B cell (primary cell): ENCODE measurements at regions of chr4 and their contacts with region 1.

Region 1: DNA sequence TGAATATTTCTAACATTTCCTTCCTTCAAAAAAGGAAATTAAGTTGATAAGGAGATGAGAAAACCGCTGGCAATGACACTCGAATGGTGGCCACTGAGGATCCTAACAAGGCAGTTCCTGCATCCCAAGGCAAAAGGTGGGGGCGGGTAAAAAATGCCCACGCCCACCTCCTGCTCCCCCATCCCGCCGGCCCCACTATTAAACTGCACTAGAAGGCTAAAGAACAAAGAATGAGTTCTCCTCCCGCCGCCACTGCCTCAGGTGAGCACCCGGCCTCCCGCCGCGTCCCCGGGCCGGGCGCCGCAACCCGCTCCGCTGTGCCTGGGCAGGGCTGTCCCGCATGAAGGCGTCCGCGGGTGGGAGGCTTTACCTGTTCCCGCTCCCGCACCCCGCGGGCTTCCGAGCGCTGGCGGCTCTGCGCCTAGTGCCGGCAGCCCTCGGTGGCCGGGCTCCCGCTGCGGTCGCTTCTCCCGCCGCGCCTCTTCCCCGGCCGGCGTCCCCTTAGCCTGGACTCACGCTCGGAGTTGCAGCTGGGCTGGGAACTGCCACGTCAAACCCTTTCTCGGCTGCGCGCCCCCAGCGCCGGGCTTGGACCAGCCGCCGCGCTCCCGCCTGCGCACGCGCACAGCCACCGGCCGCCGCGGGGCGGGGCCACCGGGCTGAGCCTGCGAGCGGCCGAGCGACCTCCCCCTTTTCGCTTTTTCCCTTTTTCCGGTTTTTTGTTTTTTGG is at the start of gene SEC24D:
- DNase-seq: peak; percentile 89
- ATAC-seq: peak; percentile 88
- H3K4me3 ChIP-seq: peak within 1 kb of the TSS; percentile 59 to 98 (median 89)
- H3K4me3 Mint-ChIP-seq: peak within 1 kb of the TSS; percentile 97
- H3K27ac ChIP-seq: peak within 1 kb of the TSS; percentile 48 to 87
- H3K27ac Mint-ChIP-seq: peak within 1 kb of the TSS; percentile 93
- H3K4me1 ChIP-seq: peaks cover 10 to 11% of the 10 kb centered on the region in 2 donors
- H3K4me1 Mint-ChIP-seq: peaks cover 17% of the 10 kb centered on the region
- H3K27me3 ChIP-seq: no peaks in the 10 kb centered on the region
- H3K27me3 Mint-ChIP-seq: peaks cover 4% of the 10 kb centered on the region
- CTCF ChIP-seq: peak; percentile 11
- total RNA-seq, gene SEC24D: 15.8 and 19.8 TPM in 2 replicates

Region 2: DNA sequence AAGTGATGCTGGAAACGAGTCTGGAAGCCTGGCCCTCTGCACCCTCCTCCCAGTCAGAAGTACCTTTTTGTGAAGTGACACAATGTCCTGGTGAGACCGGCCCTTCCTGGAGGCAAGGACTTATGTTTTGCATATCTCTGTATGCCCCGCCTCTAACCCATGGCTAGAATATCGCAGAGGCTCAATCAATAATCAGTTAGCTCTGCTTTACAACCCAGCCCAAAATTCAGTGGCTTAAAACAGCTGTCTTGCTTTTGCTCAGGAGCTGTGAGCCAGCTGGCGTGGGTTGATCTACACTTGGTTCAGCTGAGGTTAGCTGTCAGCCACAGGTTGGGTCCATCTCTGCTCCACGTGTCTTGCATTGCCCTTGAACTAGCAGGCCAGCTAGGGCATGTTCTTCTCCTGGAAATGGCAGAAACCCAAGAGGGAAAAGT is 249.4 kb before region 1 on chr4:
- CTCF ChIA-PET with region 1: no interaction called
- POLR2A ChIA-PET with region 1: no interaction called
- intact Hi-C with region 1: loop called (anchors 2 kb)
- DNase-seq: no peak
- ATAC-seq: no peak
- H3K4me3 ChIP-seq: no peak overlapping the region
- H3K4me3 Mint-ChIP-seq: no peak overlapping the region
- H3K27ac ChIP-seq: no peak overlapping the region
- H3K27ac Mint-ChIP-seq: no peak overlapping the region
- H3K4me1 ChIP-seq: peaks cover 0 to 6% of the 10 kb centered on the region in 2 donors
- H3K4me1 Mint-ChIP-seq: peaks cover 9% of the 10 kb centered on the region
- H3K27me3 ChIP-seq: peaks cover 0 to 15% (median 4%) of the 10 kb centered on the region in 4 experiments
- H3K27me3 Mint-ChIP-seq: peaks cover 27% of the 10 kb centered on the region
- CTCF ChIP-seq: no peak

Region 3: GRCh38 chr4:118760493-118760892 is 75.2 kb before region 1 on chr4:
- CTCF ChIA-PET with region 1: interaction called, 3 read pairs
- POLR2A ChIA-PET with region 1: no interaction called
- intact Hi-C with region 1: loop called (anchors 1 kb)
- DNase-seq: peak; percentile 72
- ATAC-seq: peak; percentile 94
- H3K4me3 ChIP-seq: no peak overlapping the region
- H3K4me3 Mint-ChIP-seq: peak overlapping the region; percentile 17
- H3K27ac ChIP-seq: no peak overlapping the region
- H3K27ac Mint-ChIP-seq: peak overlapping the region; percentile 65
- H3K4me1 ChIP-seq: peaks cover 14 to 19% of the 10 kb centered on the region in 2 donors
- H3K4me1 Mint-ChIP-seq: peaks cover 26% of the 10 kb centered on the region
- H3K27me3 ChIP-seq: no peaks in the 10 kb centered on the region
- H3K27me3 Mint-ChIP-seq: no peaks in the 10 kb centered on the region
- CTCF ChIP-seq: no peak

Region 4: GRCh38 chr4:119300101-119300978 is 464.6 kb after region 1 on chr4:
- CTCF ChIA-PET with region 1: no interaction called
- POLR2A ChIA-PET with region 1: no interaction called
- intact Hi-C with region 1: loop called (anchors 10 kb)
- DNase-seq: peak; percentile 95
- ATAC-seq: peak; percentile 93
- H3K4me3 ChIP-seq: peak overlapping the region; percentile 87 to 97 (median 94)
- H3K4me3 Mint-ChIP-seq: peak overlapping the region; percentile 92
- H3K27ac ChIP-seq: peak overlapping the region; percentile 91 to 92
- H3K27ac Mint-ChIP-seq: peak overlapping the region; percentile 95
- H3K4me1 ChIP-seq: peaks cover 17 to 21% of the 10 kb centered on the region in 2 donors
- H3K4me1 Mint-ChIP-seq: peaks cover 30% of the 10 kb centered on the region
- H3K27me3 ChIP-seq: no peaks in the 10 kb centered on the region
- H3K27me3 Mint-ChIP-seq: peaks cover 5% of the 10 kb centered on the region
- CTCF ChIP-seq: no peak

Region 5: DNA sequence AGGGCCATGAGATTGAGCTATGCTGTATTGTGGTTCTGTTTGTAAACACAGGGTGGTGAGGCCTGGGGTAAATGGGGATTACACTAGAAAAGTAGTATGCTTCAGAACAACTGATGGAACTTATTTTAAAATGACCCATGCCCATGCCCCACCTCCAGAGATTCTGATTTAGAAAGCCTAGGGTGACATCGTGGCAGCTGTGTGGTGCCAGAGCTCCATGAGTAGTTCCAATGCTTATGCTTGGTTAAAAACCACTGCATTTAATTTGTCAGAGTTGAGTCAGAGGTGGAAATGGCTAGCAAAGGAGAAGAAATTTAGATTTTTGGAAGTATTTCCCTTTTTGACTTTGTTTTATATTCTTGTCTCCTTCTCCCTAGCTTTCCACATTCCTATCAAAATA is 856.3 kb after region 1 on chr4:
- CTCF ChIA-PET with region 1: no interaction called
- POLR2A ChIA-PET with region 1: no interaction called
- intact Hi-C with region 1: no loop called
- DNase-seq: no peak
- ATAC-seq: no peak
- H3K4me3 ChIP-seq: no peak overlapping the region
- H3K4me3 Mint-ChIP-seq: no peak overlapping the region
- H3K27ac ChIP-seq: no peak overlapping the region
- H3K27ac Mint-ChIP-seq: no peak overlapping the region
- H3K4me1 ChIP-seq: no peaks in the 10 kb centered on the region
- H3K4me1 Mint-ChIP-seq: no peaks in the 10 kb centered on the region
- H3K27me3 ChIP-seq: peaks cover 0 to 5% (median 0%) of the 10 kb centered on the region in 4 experiments
- H3K27me3 Mint-ChIP-seq: peaks cover 8% of the 10 kb centered on the region
- CTCF ChIP-seq: no peak